Aorta (tissue), 5 donors: ENCODE measurements at regions of chr2 and their contacts with region 1.

Region 1: DNA sequence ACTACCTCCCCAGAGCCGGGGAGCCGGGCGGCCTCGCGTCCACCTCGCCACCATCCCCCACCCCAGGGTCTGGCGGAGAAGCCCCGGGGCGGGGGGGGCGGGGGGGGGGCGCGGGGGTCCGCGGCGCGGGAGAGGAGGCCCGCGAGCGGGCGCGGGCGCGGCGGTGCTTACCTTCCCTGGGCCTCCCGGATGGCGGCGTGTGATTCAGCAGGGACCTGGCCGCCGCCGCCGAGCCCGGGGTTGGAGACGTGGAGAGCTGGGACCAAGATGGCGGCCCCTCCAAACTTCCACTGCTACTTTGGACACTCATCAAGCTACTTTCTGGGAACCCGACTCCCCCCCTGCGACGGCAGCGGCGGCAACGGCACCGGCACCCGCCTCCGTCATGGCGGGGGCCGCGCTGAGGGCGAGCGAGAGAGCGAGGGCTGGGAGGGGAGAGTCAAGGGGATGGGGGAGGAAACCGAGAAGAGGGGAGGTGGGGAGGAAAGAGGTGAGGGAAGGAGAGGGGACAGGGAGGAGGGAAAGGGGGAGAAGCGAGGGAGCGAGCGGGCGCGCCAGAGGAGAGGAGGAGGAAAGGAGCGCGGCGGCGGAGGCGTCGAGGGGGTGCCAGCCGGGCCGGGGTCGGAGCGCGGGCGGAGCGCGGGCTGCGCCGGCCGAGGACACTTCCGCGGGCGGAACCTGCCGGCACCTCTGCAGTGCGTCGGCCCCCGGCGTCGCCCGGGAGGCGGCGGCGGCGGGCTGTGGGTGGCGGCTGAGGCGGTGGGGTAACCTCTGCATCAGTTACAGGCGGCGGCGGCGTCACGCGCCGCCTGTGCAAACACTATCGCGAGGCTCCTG is at the start of gene TLK1:
- DNase-seq: peak; percentile 80 to 91
- ATAC-seq: peak; percentile 82
- H3K4me3 ChIP-seq: peak within 1 kb of the TSS; percentile 96 to 97
- H3K27ac ChIP-seq: peak within 1 kb of the TSS; percentile 88 to 95
- H3K4me1 ChIP-seq: peaks cover 0 to 4% of the 10 kb centered on the region in 2 donors
- H3K27me3 ChIP-seq: no peaks in the 10 kb centered on the region
- total RNA-seq, gene TLK1: 53.7 to 61.8 TPM

Region 2: DNA sequence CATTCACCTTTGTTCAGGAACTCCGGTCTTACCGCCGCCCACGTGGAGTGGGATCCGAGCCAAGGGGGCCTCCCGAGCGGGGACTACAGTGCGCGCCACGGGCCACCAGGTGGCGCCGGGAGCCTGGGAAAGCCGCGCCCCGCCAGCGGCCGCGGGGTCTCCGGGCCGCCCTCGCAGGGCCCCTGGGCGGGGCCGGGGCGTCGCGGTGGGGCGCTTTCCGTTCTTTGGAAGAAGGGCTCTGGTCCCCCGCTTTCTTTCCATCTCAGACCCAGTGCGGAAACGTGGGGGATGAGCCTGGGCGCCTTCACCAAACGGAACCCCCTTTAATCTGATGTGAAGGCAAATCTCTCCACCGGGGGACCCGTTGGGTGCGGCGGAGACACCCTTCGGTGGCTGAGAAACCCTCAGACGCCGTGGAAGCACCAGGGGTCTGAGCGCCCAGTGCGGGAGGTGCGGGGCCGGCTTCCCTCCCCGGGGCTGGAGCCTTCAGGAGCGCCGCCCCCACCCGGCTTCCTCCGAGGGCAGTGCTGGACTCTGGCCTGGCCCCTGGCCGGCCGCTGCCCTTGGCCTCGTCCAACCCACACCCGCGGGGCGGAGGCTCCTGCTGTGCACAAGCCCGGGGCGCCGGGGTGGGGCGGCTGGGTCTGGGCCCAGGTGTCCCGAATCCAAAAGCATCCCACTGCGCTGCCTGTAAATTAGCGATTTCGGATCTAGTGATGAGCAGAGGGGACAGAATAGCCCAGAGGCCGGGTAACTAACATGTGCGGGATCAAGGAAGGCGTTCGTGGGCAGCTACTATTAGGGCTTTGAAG is 186.6 kb before region 1 on chr2:
- intact Hi-C with region 1: loop called in 1 of 2 experiments (anchors 5 kb)
- DNase-seq: peak; percentile 87 to 95
- ATAC-seq: peak; percentile 97
- H3K4me3 ChIP-seq: peak overlapping the region; percentile 29 to 40
- H3K27ac ChIP-seq: peak overlapping the region in 1 of 2 donors; percentile 9
- H3K4me1 ChIP-seq: no peaks in the 10 kb centered on the region
- H3K27me3 ChIP-seq: no peaks in the 10 kb centered on the region

Region 3: DNA sequence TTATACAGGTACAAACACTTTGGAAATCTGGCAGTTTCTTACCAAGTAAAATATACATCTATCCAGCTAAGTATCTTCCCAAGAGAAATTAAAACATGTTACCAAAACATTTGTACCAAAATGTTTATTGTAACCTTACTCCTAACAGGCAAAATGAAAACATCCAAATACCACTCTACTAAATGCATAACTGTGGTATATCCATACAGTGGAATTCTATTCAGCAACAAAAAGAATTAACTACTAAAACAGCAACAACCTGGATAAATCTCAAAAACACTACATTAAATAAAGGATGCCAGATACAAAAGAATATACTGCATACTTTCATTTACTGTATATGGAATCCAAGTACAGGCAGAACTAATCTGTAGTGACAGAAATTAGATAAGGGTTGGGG is 50.8 kb before region 1 on chr2:
- intact Hi-C with region 1: no loop called
- DNase-seq: no peak
- ATAC-seq: no peak
- H3K4me3 ChIP-seq: no peak overlapping the region
- H3K27ac ChIP-seq: no peak overlapping the region
- H3K4me1 ChIP-seq: no peaks in the 10 kb centered on the region
- H3K27me3 ChIP-seq: no peaks in the 10 kb centered on the region

Region 4: GRCh38 chr2:171124541-171124940 is 35.8 kb before region 1 on chr2:
- intact Hi-C with region 1: loop called in 1 of 2 experiments (anchors 5 kb)
- DNase-seq: no peak
- ATAC-seq: no peak
- H3K4me3 ChIP-seq: no peak overlapping the region
- H3K27ac ChIP-seq: no peak overlapping the region
- H3K4me1 ChIP-seq: peaks cover 0 to 3% of the 10 kb centered on the region in 2 donors
- H3K27me3 ChIP-seq: no peaks in the 10 kb centered on the region

Region 5: DNA sequence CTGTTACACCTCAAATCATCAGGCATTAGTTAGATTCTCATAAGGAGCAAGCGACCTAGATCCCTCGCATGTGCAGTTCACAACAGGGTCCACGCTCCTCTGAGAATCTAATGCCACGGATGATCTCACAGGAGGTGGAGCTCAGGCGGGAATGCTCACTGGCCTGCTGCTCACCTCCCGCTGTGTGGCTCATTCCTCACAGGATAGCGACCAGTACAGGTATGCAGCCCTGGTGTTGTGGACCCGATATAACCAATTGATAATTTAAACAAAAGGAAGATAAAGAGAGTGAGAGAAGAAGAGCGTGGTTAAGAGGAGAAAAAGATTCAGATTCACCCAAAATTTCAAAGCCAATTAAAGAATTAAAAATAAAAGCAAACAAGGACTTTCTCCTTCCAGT is 20.5 kb before region 1 on chr2:
- intact Hi-C with region 1: loop called in 1 of 2 experiments (anchors 2 kb)
- DNase-seq: no peak
- ATAC-seq: no peak
- H3K4me3 ChIP-seq: no peak overlapping the region
- H3K27ac ChIP-seq: no peak overlapping the region
- H3K4me1 ChIP-seq: peaks cover under 1 to 4% of the 10 kb centered on the region in 2 donors
- H3K27me3 ChIP-seq: no peaks in the 10 kb centered on the region

Region 6: DNA sequence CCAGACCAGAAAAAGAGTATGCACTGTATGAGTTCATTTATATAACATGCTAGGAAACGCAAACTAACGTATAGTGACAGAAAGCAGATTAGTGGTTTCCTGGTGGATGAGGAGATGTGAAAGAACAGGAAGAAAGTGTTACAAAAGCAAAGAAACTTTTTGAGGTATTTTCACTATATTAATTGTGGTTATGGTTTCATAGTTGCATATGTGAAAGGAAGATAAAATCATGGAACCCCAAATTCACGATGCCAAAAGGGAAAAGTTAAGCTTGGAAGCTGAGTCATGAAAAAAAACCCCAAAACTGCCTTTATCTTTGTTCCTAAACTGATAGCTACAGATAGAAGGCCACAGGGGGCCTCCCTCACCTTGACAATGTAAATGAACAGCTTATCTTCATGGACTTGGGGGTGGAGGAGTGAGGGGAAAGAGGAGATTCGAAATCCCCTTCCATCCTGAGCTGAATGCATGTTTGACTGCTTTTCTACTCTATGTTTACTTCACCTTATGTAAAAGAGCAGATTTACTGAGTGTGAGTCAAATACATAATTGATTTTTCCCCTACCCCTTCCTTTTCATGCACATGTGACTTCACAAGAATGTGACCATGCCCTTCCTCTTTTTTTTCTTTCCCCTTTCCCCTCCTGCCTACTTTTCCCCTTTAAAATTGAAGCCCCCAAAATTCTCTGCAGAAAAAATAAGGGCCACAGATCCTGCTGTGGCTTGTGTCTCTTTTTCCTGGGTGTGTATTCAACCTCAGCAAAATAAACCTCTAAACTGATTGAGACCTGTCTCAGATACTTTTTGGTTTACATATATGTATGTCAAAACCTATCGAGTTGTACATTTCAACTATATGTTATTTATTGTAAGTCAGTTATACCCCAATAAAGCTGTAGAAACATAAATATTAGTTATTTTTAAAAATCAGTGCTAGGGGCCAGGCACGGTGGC is 100.4 kb after region 1 on chr2:
- intact Hi-C with region 1: loop called in 1 of 2 experiments (anchors 5 kb)
- DNase-seq: no peak
- ATAC-seq: no peak
- H3K4me3 ChIP-seq: no peak overlapping the region
- H3K27ac ChIP-seq: no peak overlapping the region
- H3K4me1 ChIP-seq: no peaks in the 10 kb centered on the region
- H3K27me3 ChIP-seq: no peaks in the 10 kb centered on the region

Region 7: GRCh38 chr2:171416009-171416926 is 255.9 kb after region 1 on chr2:
- intact Hi-C with region 1: loop called in 1 of 2 experiments (anchors 10 kb)
- DNase-seq: peak; percentile 90 to 92
- ATAC-seq: peak; percentile 95
- H3K4me3 ChIP-seq: no peak overlapping the region
- H3K27ac ChIP-seq: no peak overlapping the region
- H3K4me1 ChIP-seq: no peaks in the 10 kb centered on the region
- H3K27me3 ChIP-seq: no peaks in the 10 kb centered on the region

Region 8: DNA sequence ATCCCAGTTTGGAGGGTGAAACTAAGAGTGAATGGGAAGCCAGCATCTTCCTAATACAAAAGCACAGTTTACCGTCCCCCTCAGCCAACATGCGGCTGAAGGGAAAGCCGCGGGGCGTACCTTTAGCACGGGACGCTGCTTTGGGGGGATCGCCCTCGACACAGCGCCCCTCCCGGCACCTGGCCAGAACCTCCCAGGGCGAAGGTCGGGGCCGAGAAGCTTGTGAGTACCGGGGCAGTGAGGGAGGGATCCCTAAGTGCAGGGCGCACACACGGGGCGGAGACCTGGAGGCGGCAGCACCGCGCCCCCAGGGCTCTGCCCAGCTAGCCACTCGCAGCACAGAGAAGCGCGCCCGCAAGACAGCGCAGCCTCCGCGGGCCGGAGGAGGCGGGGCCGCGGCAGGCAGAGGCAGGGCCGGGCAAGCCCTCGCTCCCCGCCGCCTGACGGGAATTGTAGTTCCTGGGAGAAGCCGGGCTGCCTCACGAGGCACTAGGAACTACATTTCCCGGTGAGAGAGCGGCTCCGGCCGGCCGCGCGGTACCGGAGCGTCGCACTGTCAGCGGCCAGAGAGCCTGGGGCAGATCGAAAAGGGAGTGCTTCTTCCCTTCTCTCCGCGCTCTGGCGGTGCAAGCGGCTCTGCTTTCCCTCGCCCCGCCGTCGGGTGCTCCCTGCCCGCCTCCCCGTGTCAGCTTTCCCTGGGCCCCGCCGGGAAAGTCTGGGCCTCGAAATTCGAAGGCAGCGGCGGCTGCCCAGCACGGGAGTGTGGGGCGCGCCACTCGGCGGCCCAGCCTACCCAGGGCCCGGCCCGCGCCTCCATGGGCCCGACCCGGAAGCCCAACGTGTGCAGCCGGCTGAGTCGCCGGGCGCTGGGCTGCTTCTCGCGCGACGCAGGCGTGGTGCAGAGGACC is 273.7 kb after region 1 on chr2 and contains the starts of genes DCAF17 and METTL8:
- intact Hi-C with region 1: loop called in 1 of 2 experiments (anchors 5 kb)
- DNase-seq: peak; percentile 97 to 98
- ATAC-seq: peak; percentile 99
- H3K4me3 ChIP-seq: peak within 1 kb of the TSS; percentile 62 to 86
- H3K27ac ChIP-seq: peak within 1 kb of the TSS; percentile 19 to 64
- H3K4me1 ChIP-seq: peaks cover 0 to 3% of the 10 kb centered on the region in 2 donors
- H3K27me3 ChIP-seq: no peaks in the 10 kb centered on the region
- total RNA-seq, gene DCAF17: 17.5 to 20.3 TPM
- total RNA-seq, gene METTL8: 18.4 to 26.2 TPM